ENCODE measurements at regions of chr1 and their contacts with region 1.

Region 1: GRCh38 chr1:221839796-221840395 is 98.0 kb upstream of the DUSP10 start:
- DNase-seq: peak; percentile 80
- ATAC-seq: peak; percentile 80
- H3K4me3 Mint-ChIP-seq: peak overlapping the region; percentile 29
- H3K27ac Mint-ChIP-seq: peak overlapping the region; percentile 95
- H3K4me1 Mint-ChIP-seq: peaks cover 50% of the 10 kb centered on the region
- H3K27me3 Mint-ChIP-seq: no peaks in the 10 kb centered on the region
- CTCF ChIP-seq: no peak

Region 2: DNA sequence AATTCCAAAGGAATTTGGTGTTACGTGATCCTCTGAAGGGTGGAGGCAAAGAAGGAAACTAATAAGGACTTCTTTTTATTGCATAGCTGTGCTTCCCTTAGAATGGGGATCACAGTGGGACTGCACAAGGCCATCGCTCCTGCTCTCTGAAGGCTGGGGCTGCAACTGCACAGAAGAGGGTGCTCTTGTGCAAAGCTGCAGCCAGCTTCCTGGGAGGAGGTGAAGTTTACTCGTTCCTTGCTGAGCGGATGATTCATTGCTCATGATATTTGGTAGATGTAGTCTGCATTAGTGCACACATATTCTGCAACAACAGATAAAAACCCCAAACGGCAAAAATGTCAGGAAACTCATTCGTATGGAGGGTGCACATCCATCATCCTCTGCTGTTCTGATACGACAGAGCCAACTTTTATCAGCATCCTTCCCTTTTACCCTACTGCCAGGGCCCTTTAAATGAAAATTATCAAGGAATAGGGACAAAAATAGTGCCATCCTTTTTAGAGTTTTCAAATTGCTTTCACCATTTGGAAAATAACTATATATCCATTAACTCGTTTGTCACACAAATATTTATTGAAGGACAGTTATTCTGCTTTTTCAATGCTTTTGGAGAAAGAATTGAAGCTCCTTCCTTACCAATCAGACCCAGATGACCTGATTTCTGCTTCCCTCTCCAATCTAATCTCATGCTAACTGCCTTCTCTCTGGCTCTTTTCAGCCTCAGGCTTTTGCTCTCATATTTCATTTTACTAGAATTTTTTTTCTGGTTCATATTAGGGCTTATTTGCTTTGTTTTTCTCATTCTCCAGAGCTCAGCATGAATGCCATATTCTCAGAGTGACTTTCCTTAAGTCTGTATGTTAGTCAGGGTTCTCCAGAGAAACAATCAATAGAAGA is 361.6 kb before region 1 on chr1:
- CTCF ChIA-PET with region 1: interaction called, 4 read pairs
- POLR2A ChIA-PET with region 1: no interaction called
- intact Hi-C with region 1: loop called (anchors 5 kb)
- DNase-seq: peak; percentile 27
- ATAC-seq: peak; percentile 93
- H3K4me3 Mint-ChIP-seq: no peak overlapping the region
- H3K27ac Mint-ChIP-seq: no peak overlapping the region
- H3K4me1 Mint-ChIP-seq: peaks cover 4% of the 10 kb centered on the region
- H3K27me3 Mint-ChIP-seq: peaks cover 4% of the 10 kb centered on the region
- CTCF ChIP-seq: no peak

Region 3: GRCh38 chr1:221753828-221754188 is 86.1 kb before region 1 on chr1:
- CTCF ChIA-PET with region 1: interaction called, 3 read pairs
- POLR2A ChIA-PET with region 1: interaction called, 14 read pairs
- intact Hi-C with region 1: loop called (anchors 1 kb)
- DNase-seq: no peak
- ATAC-seq: peak; percentile 4
- H3K4me3 Mint-ChIP-seq: peak overlapping the region; percentile 71
- H3K27ac Mint-ChIP-seq: peak overlapping the region; percentile 89
- H3K4me1 Mint-ChIP-seq: peaks cover 50% of the 10 kb centered on the region
- H3K27me3 Mint-ChIP-seq: no peaks in the 10 kb centered on the region
- CTCF ChIP-seq: no peak

Region 4: GRCh38 chr1:221824025-221824424 is 15.9 kb before region 1 on chr1:
- CTCF ChIA-PET with region 1: interaction called, 5 read pairs
- POLR2A ChIA-PET with region 1: interaction called, 28 read pairs
- intact Hi-C with region 1: loop called (anchors 1 kb)
- DNase-seq: no peak
- ATAC-seq: peak; percentile 40
- H3K4me3 Mint-ChIP-seq: peak overlapping the region; percentile 58
- H3K27ac Mint-ChIP-seq: peak overlapping the region; percentile 85
- H3K4me1 Mint-ChIP-seq: peaks cover 67% of the 10 kb centered on the region
- H3K27me3 Mint-ChIP-seq: no peaks in the 10 kb centered on the region
- CTCF ChIP-seq: no peak

Region 5: GRCh38 chr1:221878134-221878533 is 38.2 kb after region 1 on chr1:
- CTCF ChIA-PET with region 1: interaction called, 3 read pairs
- POLR2A ChIA-PET with region 1: interaction called, 10 read pairs
- intact Hi-C with region 1: loop called (anchors 1 kb)
- DNase-seq: no peak
- ATAC-seq: peak; percentile 36
- H3K4me3 Mint-ChIP-seq: no peak overlapping the region
- H3K27ac Mint-ChIP-seq: no peak overlapping the region
- H3K4me1 Mint-ChIP-seq: peaks cover 48% of the 10 kb centered on the region
- H3K27me3 Mint-ChIP-seq: no peaks in the 10 kb centered on the region
- CTCF ChIP-seq: no peak

Region 6: DNA sequence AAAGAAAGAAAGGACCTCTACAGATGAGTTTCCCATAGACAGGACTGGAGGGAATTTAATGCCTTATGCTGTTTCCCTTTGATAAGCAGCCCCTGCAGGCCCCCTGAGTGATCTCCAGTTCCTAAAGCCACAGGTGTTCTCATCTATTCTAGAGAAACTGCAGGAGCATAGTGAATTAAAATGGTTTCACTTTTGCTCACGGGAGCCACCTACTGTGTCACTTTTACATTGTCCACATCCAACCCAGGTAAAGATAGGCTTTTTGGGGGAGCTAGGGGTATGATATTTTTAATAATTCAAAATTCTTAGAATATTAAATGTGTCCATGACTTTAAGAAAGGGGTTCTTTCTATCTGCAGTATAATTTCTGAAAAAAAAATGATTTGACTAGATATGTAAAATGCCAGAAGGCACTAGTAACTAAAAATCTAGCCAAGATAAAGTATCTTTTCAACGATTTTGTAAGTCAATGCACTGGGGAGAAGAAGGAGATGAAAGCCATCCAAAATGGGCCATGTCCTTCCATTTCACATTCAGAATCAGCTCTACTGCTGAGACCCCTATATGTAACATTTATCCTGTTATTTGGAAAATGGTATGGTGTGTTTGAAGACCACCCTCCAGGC is 169.3 kb after region 1 on chr1:
- CTCF ChIA-PET with region 1: interaction called, 3 read pairs
- POLR2A ChIA-PET with region 1: no interaction called
- intact Hi-C with region 1: loop called (anchors 1 kb)
- DNase-seq: no peak
- ATAC-seq: peak; percentile 77
- H3K4me3 Mint-ChIP-seq: no peak overlapping the region
- H3K27ac Mint-ChIP-seq: no peak overlapping the region
- H3K4me1 Mint-ChIP-seq: peaks cover 2% of the 10 kb centered on the region
- H3K27me3 Mint-ChIP-seq: no peaks in the 10 kb centered on the region
- CTCF ChIP-seq: no peak

Measured in activated B cell treated with CpG ODN at 0.5 μM for 24 hours (primary cell).